ENCODE measurements at regions of chr9 and their contacts with region 1.

Region 1: DNA sequence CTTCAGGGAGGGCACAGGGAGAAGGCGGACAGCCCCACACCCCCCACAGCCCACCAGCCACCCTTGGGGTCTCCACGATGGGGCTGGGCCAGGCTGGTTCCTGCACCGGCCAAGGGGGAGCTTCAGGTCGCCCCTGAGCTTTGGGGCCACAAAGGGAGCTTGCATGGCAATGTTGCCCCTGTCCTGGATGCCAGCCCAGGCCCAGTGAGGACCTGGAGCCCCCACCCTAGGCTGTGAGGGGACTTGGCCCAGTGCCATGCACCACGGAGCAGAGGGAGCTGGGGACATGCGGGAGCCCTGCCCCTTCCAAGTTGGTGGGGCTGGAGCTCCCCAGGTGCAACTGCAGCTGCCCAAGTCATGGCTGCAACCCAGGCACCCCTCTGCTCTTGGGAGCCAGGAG is 18.4 kb downstream of the TMEM38B start:
- DNase-seq: no peak
- ATAC-seq: no peak
- H3K4me3 Mint-ChIP-seq: no peak overlapping the region
- H3K27ac Mint-ChIP-seq: no peak overlapping the region
- H3K4me1 Mint-ChIP-seq: peaks cover 8% of the 10 kb centered on the region
- H3K27me3 Mint-ChIP-seq: no peaks in the 10 kb centered on the region

Region 2: DNA sequence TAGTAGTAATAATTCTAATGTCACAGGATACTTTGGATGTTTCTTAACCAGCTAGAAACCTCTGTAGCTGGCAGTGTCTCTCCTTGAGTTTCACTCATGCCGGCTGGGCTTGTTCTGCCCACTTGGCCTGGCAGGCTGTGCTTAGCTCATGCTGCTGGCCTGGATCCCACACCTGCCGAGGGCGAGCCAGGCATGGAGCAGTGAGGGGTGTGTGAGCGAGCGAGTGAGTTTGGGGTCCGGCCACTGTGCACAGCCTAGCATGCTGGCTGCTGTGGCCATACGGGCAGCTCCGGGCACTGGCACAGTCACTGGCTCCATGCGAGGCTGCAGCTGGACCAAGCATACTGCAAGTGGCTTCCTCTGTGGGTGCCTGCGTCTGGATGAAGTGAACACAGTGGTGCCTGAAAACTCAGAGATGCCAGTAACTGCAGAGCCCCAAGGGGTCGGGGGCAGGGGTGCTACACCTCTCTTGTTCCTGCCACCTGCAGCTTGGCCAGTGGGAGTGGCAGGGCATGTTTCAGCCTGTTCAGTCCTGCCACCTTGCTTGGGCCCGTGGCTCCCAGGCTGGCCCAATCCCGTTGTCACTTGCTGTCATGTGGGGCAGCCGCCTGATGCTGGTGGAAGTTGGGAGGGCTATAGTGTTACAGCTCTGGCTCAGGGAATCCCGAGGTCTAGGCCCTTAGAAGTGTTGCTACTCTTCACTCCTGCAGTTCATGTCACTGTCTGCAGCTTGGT is 255.0 kb before region 1 on chr9:
- CTCF ChIA-PET with region 1: no interaction called
- POLR2A ChIA-PET with region 1: no interaction called
- DNase-seq: no peak
- ATAC-seq: no peak
- H3K4me3 Mint-ChIP-seq: no peak overlapping the region
- H3K27ac Mint-ChIP-seq: no peak overlapping the region
- H3K4me1 Mint-ChIP-seq: no peaks in the 10 kb centered on the region
- H3K27me3 Mint-ChIP-seq: no peaks in the 10 kb centered on the region

Region 3: DNA sequence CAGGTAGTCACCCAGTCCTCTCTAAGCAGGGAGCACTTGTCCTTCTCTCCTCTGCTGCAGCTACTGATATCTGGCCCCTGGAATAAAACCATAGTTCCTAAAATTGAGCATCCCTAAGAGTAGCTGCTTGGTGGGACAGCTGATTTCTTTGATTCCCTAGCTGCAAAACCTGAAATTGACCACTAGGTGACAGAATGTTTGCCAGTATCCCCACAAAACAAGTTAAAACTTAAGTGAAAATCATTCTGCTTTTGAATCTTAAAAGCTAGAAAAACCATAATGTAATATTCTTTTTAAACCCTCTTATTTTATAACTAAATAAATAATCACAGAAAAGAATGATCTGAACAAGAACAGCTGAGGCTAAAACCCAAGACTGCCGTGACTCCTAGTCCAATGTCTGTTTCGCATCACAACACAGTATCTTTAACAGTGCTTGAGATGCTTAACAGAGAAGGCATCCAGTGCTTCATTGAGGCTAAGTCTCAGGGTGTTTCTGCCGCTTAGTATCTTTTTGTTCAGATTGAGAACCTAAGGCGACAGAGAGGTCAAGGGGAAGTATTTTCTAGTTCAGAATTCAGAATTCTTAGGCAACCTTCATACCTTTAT is 74.9 kb before region 1 on chr9:
- CTCF ChIA-PET with region 1: interaction called, 12 read pairs
- POLR2A ChIA-PET with region 1: no interaction called
- DNase-seq: no peak
- ATAC-seq: no peak
- H3K4me3 Mint-ChIP-seq: no peak overlapping the region
- H3K27ac Mint-ChIP-seq: no peak overlapping the region
- H3K4me1 Mint-ChIP-seq: no peaks in the 10 kb centered on the region
- H3K27me3 Mint-ChIP-seq: no peaks in the 10 kb centered on the region

Region 4: DNA sequence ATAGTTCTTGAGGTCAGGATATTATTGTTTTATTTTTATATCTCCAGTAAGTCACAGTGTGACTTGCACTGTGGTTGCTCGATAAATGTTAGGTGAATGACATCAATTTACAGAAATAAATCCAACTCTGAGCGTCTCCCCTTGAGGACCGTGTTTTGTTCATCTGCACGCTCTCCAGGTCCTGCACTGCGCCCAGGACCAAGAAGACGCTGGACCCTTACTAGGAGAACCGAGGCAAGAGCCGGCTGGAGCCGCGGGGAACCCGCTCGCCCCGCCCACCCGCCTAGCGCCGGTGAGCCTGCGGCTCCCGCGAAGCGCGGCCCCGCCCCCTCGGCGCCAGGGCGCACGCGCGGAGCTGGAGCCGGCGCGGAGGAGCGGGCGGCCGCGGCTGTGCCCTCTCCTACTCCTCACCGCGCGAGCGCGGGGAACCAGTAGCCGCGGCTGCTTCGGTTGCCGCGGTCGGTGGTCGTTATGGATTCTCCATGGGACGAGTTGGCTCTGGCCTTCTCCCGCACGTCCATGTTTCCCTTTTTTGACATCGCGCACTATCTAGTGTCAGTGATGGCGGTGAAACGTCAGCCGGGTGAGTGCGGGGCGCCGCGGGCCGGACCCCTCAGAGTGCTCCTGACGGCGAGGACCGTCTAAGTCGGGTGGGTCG is 18.5 kb before region 1 on chr9 and contains the start of gene TMEM38B:
- CTCF ChIA-PET with region 1: interaction called, 10 read pairs
- POLR2A ChIA-PET with region 1: interaction called, 3 read pairs
- DNase-seq: peak; percentile 76
- ATAC-seq: peak; percentile 94
- H3K4me3 Mint-ChIP-seq: peak within 1 kb of the TSS; percentile 81
- H3K27ac Mint-ChIP-seq: peak within 1 kb of the TSS; percentile 48
- H3K4me1 Mint-ChIP-seq: peaks cover 15% of the 10 kb centered on the region
- H3K27me3 Mint-ChIP-seq: peaks cover 19% of the 10 kb centered on the region
- total RNA-seq, gene TMEM38B: 6.4 to 7.5 TPM